ENCODE measurements at regions of chr5 and their contacts with region 1.

Region 1: GRCh38 chr5:72523960-72524582 is 16.9 kb upstream of the ZNF366 start:
- DNase-seq: no peak
- ATAC-seq: peak in 3 of 4 donors; percentile 83 to 84 (median 83)
- H3K4me3 ChIP-seq: no peak overlapping the region
- H3K27ac ChIP-seq: no peak overlapping the region
- H3K4me1 ChIP-seq: no peaks in the 10 kb centered on the region
- H3K27me3 ChIP-seq: no peaks in the 10 kb centered on the region
- CTCF ChIP-seq: peak in 1 of 4 donors; percentile 21

Region 2: GRCh38 chr5:72366324-72366976 is 157.6 kb before region 1 on chr5:
- intact Hi-C with region 1: loop called in 1 of 3 experiments (anchors 10 kb)
- DNase-seq: peak in 4 of 6 donors; percentile 44 to 75 (median 68)
- ATAC-seq: peak; percentile 96 to 99 (median 98)
- H3K4me3 ChIP-seq: no peak overlapping the region
- H3K27ac ChIP-seq: no peak overlapping the region
- H3K4me1 ChIP-seq: no peaks in the 10 kb centered on the region
- H3K27me3 ChIP-seq: no peaks in the 10 kb centered on the region
- CTCF ChIP-seq: peak; percentile 48 to 69 (median 61)

Region 3: GRCh38 chr5:72394688-72395087 is 129.4 kb before region 1 on chr5:
- intact Hi-C with region 1: loop called in 1 of 3 experiments (anchors 10 kb)
- DNase-seq: no peak
- ATAC-seq: peak in 1 of 4 donors; percentile 30
- H3K4me3 ChIP-seq: no peak overlapping the region
- H3K27ac ChIP-seq: no peak overlapping the region
- H3K4me1 ChIP-seq: peaks cover 3 to 11% (median 10%) of the 10 kb centered on the region in 3 donors
- H3K27me3 ChIP-seq: no peaks in the 10 kb centered on the region
- CTCF ChIP-seq: no peak

Measured in pancreas (tissue), 10 donors.